Activated naive CD4-positive, alpha-beta T cell treated with anti-CD3 and anti-CD28 coated beads for 36 hours (primary cell): ENCODE measurements at regions of chr20 and their contacts with region 1.

Region 1: GRCh38 chr20:17968366-17969279 is at the starts of genes MGME1 and SNX5:
- DNase-seq: peak; percentile 99
- H3K4me3 Mint-ChIP-seq: peak within 1 kb of the TSS; percentile 86
- H3K27ac Mint-ChIP-seq: peak within 1 kb of the TSS; percentile 98
- H3K4me1 Mint-ChIP-seq: peaks cover 49% of the 10 kb centered on the region
- H3K27me3 Mint-ChIP-seq: no peaks in the 10 kb centered on the region
- total RNA-seq, gene MGME1: 28.7 to 30.6 TPM
- total RNA-seq, gene SNX5: 228 to 237 TPM

Region 2: GRCh38 chr20:17558154-17558940 is 410.3 kb before region 1 on chr20:
- CTCF ChIA-PET with region 1: no interaction called
- intact Hi-C with region 1: loop called (anchors 5 kb)
- DNase-seq: peak; percentile 37
- H3K4me3 Mint-ChIP-seq: no peak overlapping the region
- H3K27ac Mint-ChIP-seq: peak overlapping the region; percentile 79
- H3K4me1 Mint-ChIP-seq: peaks cover 37% of the 10 kb centered on the region
- H3K27me3 Mint-ChIP-seq: no peaks in the 10 kb centered on the region

Region 3: DNA sequence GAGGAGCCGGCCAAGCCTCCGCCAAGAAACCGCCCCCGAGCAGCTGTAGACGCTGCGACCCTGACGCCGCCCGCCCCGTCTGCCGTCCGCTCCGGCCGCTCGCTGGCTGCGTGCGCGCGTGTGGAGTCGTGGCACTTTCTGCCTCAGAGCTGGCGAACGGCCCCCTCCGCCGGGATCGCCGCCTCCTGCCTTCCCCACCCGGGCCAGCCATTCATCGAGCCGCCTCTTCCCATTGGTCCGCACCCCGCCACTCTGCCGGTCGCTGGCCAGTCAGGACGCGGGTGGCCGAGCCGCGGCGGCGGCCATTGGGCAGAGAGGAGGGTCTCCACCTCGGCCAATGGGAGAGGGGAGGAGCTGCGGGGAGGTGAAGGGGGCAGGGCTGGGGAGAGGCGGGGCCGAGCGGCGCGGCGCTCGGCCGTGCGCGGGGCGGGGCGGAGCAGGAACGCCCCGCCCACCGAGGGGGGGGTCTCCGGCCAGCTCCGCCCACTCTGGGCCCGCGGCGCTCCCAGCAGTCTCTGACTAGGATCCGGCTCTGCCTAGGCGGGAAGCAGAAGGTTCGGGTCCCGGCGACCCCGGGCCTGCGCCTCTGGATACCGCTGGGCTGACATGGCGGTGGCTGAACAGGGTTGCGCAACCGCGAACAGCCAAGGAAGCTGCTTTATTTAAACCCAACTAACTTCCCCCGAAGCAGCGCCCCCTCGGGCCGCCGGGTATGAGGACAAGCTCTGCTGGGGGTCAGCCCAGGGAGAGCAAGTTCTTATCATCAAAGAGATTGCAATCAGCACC is 286.3 kb before region 1 on chr20 and contains the start of gene RRBP1:
- CTCF ChIA-PET with region 1: interaction called, 3 read pairs
- intact Hi-C with region 1: loop called (anchors 1 kb)
- DNase-seq: peak; percentile 97
- H3K4me3 Mint-ChIP-seq: peak within 1 kb of the TSS; percentile 81
- H3K27ac Mint-ChIP-seq: peak within 1 kb of the TSS; percentile 47
- H3K4me1 Mint-ChIP-seq: peaks cover 15% of the 10 kb centered on the region
- H3K27me3 Mint-ChIP-seq: peaks cover 19% of the 10 kb centered on the region
- total RNA-seq, gene RRBP1: 19.6 to 20.0 TPM

Region 4: DNA sequence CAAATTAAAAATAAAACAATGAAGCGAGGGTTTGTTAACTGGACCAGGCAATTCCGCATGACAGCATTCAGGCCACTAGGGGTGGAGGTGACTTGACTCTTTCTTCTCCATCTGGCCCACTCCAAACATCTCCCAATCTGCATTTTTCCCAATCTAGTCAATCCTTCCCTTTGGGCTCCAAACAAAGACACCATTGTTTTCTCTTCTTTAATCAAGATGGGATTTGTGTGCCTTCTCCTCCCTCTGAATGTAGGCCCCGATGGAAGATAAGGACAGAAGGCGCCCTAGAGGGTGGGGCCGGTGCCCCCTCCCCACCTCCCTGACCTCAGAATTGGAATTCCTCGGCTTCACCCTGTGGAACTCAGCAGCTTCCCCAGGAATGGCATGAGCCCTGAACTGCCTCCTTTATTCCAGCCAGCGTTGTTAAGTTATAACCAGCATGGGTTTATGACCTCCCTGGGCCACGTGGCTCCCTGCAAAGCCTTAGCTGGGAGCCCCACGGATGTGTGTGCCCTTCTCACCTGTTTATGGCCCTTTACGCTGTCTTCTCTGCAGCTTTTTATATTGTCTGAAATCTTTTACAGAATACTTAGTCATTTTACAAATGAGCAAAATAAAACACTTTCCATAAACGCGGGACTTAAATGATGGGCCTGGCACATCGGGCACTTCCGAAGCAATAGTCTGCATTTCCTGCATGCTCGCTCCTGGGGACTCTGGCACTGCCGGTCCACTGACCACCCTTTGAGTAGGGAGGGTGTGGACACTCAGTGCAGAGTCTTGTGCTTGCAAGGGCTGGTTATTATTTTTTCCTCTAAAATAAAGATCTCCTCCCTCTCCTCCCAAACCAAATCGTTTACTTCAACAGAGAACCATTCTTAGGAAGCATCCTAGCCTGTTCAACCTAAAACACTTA is 64.6 kb after region 1 on chr20:
- CTCF ChIA-PET with region 1: no interaction called
- intact Hi-C with region 1: no loop called
- DNase-seq: no peak
- H3K4me3 Mint-ChIP-seq: no peak overlapping the region
- H3K27ac Mint-ChIP-seq: no peak overlapping the region
- H3K4me1 Mint-ChIP-seq: no peaks in the 10 kb centered on the region
- H3K27me3 Mint-ChIP-seq: no peaks in the 10 kb centered on the region

Region 5: GRCh38 chr20:18137412-18138265 is 169.0 kb after region 1 on chr20 and contains the starts of genes KAT14 and PET117:
- CTCF ChIA-PET with region 1: no interaction called
- intact Hi-C with region 1: loop called (anchors 1 kb)
- DNase-seq: peak; percentile 91
- H3K4me3 Mint-ChIP-seq: peak within 1 kb of the TSS; percentile 75
- H3K27ac Mint-ChIP-seq: peak within 1 kb of the TSS; percentile 77
- H3K4me1 Mint-ChIP-seq: peaks cover 30% of the 10 kb centered on the region
- H3K27me3 Mint-ChIP-seq: no peaks in the 10 kb centered on the region
- total RNA-seq, gene KAT14: 10.3 to 12.9 TPM
- total RNA-seq, gene PET117: 16.7 to 17.9 TPM

Region 6: DNA sequence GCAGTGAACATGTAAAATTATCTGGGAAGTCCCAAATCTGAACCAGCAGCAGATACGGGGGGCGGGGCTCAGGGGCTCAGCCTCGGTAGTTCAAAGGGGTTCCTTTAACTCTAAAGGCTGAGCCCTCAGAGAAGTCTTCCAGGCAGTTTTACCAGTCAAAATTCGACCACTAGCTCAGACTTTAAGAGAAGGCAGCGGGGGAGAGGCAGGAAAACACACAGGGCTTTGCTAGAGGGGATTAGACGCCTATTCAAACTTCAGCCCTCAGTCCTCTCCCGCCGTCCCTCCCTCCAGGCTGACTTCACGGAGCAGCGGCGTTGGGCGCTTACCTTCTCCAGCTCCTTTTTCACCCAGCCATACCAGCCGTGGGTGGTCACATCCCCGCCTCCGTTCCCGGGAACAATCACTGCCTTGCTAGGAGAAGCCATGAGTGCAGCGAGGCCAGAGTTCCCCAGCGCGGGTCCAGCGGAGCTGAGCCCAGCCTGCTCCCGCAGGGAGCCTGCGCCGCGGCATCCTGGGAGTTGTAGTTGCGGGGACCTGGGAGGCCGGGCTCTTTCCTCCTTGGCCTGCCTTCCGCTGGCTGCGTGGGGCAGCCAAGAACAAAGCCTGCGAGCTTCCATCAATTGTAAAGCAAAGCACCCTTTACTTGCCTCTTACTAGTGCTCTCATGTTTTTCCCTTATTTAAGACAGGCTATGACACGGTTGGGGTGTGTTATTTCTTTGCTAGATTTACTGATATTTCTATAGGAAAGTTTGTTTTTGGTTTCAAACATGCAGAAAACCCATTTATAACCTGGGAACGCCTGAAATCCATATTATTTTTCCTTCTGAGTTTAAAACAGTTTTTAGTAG is 528.3 kb after region 1 on chr20 and contains the start of gene RBBP9:
- CTCF ChIA-PET with region 1: no interaction called
- intact Hi-C with region 1: loop called (anchors 2 kb)
- DNase-seq: peak; percentile 88
- H3K4me3 Mint-ChIP-seq: peak within 1 kb of the TSS; percentile 91
- H3K27ac Mint-ChIP-seq: peak within 1 kb of the TSS; percentile 84
- H3K4me1 Mint-ChIP-seq: peaks cover 11% of the 10 kb centered on the region
- H3K27me3 Mint-ChIP-seq: no peaks in the 10 kb centered on the region
- total RNA-seq, gene RBBP9: 17.3 to 18.1 TPM